Brain microvascular endothelial cell (primary cell): ENCODE measurements at regions of chr16 and their contacts with region 1.

Region 1: GRCh38 chr16:30893744-30894539 is at the start of gene BCL7C:
- DNase-seq: peak; percentile 62
- H3K4me3 ChIP-seq: peak within 1 kb of the TSS; percentile 88
- H3K27ac ChIP-seq: peak within 1 kb of the TSS; percentile 48
- H3K27me3 ChIP-seq: no peaks in the 10 kb centered on the region
- CTCF ChIP-seq: peak; percentile 42

Region 2: DNA sequence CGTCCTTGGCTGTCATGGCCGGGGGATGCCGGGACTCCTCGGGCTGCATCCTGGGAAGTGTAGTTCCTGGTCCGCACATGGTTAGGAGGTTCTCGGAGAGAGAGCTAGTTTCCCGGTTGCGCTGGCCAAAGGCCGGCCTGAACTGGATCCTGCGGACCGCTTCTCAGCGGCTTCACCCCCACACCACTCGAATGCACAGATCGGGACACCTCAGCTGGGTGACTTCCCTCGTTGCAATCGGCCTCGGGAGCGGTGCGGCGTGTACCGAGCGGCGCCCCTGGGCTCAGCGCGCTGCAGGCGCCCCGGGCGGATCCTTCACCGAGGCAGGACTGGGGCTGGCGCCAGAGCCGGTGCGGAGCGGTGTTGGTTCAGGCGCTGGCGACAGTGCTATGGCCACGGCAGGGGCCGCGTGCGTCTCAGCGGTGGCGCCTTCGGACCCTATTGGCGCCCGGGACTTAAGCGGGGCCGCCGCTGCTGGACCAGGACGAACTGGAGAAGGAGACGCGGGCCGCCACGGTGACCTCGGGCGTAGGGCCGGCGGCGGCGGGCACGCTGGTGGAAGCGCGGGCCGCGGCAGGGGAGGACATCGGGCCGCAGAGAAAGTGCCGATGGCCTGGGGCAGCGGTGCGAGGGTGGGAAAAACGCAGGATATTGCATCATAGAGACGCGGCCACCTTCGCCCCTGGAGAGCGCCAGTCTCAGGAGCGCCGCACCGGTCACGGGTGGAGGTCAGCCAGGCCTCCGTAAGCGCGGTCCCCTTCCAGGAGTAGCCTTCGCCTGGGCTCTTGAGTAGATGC is 118.4 kb before region 1 on chr16:
- in situ Hi-C with region 1: loop called (anchors 25 kb)
- DNase-seq: peak; percentile 78
- H3K4me3 ChIP-seq: peak overlapping the region; percentile 74
- H3K27ac ChIP-seq: peak overlapping the region; percentile 55
- H3K27me3 ChIP-seq: no peaks in the 10 kb centered on the region
- CTCF ChIP-seq: no peak

Region 3: GRCh38 chr16:31009894-31010584 is 116.1 kb after region 1 on chr16:
- in situ Hi-C with region 1: no loop called
- DNase-seq: no peak
- H3K4me3 ChIP-seq: peak overlapping the region; percentile 47
- H3K27ac ChIP-seq: no peak overlapping the region
- H3K27me3 ChIP-seq: peaks cover 4% of the 10 kb centered on the region
- CTCF ChIP-seq: peak; percentile 17

Region 4: DNA sequence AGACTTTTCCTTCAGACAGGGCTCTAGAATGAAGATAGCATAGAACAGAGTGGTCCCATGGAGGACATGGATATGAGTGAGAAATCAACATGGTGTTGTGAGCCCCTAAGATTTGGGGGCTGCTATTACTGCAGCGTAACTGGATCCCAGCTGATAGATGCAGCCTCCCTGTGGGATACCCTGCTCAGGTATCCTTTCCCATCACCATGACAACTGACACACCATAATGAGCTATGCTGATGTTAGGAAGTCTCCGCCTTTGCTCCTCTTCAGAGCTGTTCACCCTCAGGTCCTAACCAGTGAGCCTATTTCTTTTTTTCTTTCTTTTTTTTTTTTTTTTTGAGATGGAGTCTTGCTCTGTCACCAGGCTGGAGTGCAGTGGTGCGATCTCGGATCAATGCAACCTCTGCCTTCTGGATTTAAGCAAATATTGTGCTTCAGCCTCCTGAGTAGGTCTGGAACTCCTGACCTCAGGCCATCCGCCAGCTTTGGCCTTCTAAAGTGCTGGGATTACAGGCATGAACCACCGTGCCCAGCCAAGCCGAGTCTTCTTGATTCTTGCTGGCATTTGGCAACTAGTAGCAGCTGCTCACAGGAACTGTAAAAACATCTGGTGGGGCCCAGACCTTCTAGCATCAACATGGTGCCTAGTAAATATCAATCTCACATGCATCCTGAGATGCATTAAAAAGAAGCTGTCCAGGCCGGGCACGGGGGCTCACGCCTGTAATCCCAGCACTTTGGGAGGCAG is 156.5 kb after region 1 on chr16:
- in situ Hi-C with region 1: no loop called
- DNase-seq: no peak
- H3K4me3 ChIP-seq: no peak overlapping the region
- H3K27ac ChIP-seq: no peak overlapping the region
- H3K27me3 ChIP-seq: no peaks in the 10 kb centered on the region
- CTCF ChIP-seq: no peak